ENCODE measurements at regions of chr7 and their contacts with region 1.

Region 1: GRCh38 chr7:114889646-114890285 is 32.1 kb upstream of the MDFIC start:
- DNase-seq: peak in 3 of 5 donors; percentile 1 to 60 (median 6)
- H3K4me3 ChIP-seq: no peak overlapping the region
- H3K4me3 Mint-ChIP-seq: peak overlapping the region in 1 of 8 donors; percentile 32
- H3K27ac ChIP-seq: no peak overlapping the region
- H3K27ac Mint-ChIP-seq: peak overlapping the region in 4 of 7 donors; percentile 2 to 50 (median 20)
- H3K4me1 ChIP-seq: no peaks in the 10 kb centered on the region
- H3K4me1 Mint-ChIP-seq: peaks cover 4 to 11% (median 9%) of the 10 kb centered on the region in 4 donors
- H3K27me3 ChIP-seq: no peaks in the 10 kb centered on the region
- H3K27me3 Mint-ChIP-seq: no peaks in the 10 kb centered on the region

Region 2: DNA sequence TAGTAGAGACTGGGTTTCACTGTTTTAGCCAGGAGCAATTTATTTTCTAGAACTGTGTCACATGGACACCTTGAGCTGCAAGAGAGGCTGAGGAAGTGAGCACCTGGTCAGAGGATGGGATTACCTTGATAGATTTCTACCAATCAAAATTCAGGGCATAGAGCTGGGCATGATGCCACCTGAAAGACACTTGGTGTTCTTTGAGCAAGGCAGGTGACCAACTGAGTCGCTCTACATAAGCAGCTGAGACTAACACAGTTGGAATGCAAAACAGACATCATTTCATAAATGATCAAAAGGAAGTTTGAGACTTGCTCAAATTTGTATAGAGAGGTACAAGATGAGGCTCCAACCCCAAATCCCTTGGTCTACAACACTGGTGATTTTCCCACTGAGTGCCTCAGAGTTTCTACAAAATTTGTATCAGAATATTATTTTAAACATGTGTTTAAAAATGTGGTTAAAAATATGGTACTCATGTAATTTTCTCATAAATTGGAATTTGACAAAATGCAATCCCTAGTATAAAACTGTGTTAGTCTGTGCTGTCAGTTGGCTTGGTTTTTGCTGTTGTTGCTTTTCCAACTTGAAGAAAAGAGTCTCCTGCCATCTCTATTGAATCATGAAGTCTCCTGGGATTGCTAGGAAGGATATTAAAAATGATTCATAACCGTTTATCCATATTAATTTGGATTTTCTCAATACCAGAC is 124.3 kb before region 1 on chr7:
- CTCF ChIA-PET with region 1: no interaction called
- POLR2A ChIA-PET with region 1: no interaction called
- intact Hi-C with region 1: no loop called
- DNase-seq: no peak
- H3K4me3 ChIP-seq: no peak overlapping the region
- H3K4me3 Mint-ChIP-seq: no peak overlapping the region
- H3K27ac ChIP-seq: no peak overlapping the region
- H3K27ac Mint-ChIP-seq: no peak overlapping the region
- H3K4me1 ChIP-seq: no peaks in the 10 kb centered on the region
- H3K4me1 Mint-ChIP-seq: no peaks in the 10 kb centered on the region
- H3K27me3 ChIP-seq: no peaks in the 10 kb centered on the region
- H3K27me3 Mint-ChIP-seq: peaks cover 0 to 4% of the 10 kb centered on the region in 2 donors

Region 3: GRCh38 chr7:114916261-114916892 is 26.6 kb after region 1 on chr7:
- CTCF ChIA-PET with region 1: no interaction called
- POLR2A ChIA-PET with region 1: no interaction called
- intact Hi-C with region 1: loop called (anchors 2 kb)
- DNase-seq: peak in 3 of 5 donors; percentile 22 to 36 (median 24)
- H3K4me3 ChIP-seq: no peak overlapping the region
- H3K4me3 Mint-ChIP-seq: peak overlapping the region; percentile 67 to 92 (median 84)
- H3K27ac ChIP-seq: peak overlapping the region; percentile 31
- H3K27ac Mint-ChIP-seq: peak overlapping the region; percentile 86 to 98 (median 95)
- H3K4me1 ChIP-seq: peaks cover 43% of the 10 kb centered on the region
- H3K4me1 Mint-ChIP-seq: peaks cover 38 to 53% (median 47%) of the 10 kb centered on the region in 4 donors
- H3K27me3 ChIP-seq: no peaks in the 10 kb centered on the region
- H3K27me3 Mint-ChIP-seq: no peaks in the 10 kb centered on the region

Measured in CD4-positive, alpha-beta memory T cell (primary cell).